Aorta (tissue), 5 donors: ENCODE measurements at regions of chr12 and their contacts with region 1.

Region 1: DNA sequence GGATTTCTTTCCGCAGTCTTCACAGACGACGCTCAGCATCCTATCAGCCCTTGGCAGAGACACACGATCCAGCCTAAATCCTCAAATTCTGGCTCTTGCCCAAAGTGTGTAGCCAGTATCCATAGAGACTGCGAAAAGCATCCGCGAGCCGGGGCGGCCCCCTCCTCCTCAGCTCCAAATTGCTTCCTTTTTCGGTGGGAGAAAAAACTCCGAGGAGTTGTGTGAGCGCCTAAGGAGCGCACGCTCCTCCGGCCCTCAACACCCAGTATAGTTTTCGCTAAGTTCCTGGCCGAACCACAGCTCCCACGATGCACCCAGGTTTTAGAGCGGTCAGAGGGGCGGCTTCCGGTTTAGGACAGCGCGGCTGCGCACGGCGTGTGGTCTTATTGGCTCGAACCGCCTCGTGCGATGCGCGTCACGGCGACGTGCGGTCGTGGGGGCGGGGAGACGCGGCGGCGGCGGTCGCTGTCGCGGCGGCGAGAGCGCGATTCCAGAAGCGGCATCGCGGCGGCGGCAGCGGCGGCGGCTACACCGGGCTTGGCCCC is at the start of gene ADIPOR2:
- DNase-seq: peak; percentile 98
- ATAC-seq: peak; percentile 99
- H3K4me3 ChIP-seq: peak within 1 kb of the TSS; percentile 66 to 77
- H3K27ac ChIP-seq: peak within 1 kb of the TSS; percentile 46 to 65
- H3K4me1 ChIP-seq: no peaks in the 10 kb centered on the region
- H3K27me3 ChIP-seq: no peaks in the 10 kb centered on the region
- total RNA-seq, gene ADIPOR2: 47.6 to 50.5 TPM

Region 2: DNA sequence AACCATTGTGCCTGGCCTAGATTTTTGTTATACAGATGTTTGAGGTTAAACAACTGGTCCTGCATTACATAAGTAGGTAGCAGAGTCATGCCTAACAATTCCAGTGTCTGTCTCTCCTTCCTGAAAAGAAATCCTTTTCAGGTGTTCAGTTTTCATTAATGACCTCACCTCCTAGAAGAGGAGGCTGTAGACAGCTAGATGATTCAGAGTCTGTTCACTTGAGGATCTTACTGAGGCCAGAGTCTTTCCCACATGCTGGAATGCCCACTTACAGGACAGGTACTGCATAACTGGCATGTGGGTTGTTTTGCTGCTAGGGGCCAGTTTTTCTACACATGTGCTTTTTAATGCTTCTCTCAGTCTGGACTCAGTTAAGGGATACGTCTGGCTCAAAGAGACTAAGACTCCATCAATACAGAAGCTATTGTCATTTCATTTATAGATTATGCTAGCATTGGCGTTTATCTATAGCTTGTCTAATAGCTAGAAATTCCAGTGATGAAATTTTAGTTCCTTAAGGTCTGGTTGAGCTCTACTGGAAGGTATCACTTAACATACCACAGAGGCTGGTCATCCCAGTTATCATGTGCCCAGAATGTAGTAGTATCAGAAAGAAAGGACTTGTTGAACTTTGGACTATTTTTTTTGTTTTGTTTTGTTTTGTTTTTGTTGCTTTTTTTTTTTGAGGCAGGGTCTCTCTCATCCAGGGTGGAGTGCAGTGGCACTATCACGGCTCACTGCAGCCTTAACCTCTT is 493.2 kb before region 1 on chr12:
- intact Hi-C with region 1: no loop called
- DNase-seq: no peak
- ATAC-seq: no peak
- H3K4me3 ChIP-seq: no peak overlapping the region
- H3K27ac ChIP-seq: no peak overlapping the region
- H3K4me1 ChIP-seq: no peaks in the 10 kb centered on the region
- H3K27me3 ChIP-seq: no peaks in the 10 kb centered on the region

Region 3: GRCh38 chr12:1661553-1662335 is 28.9 kb before region 1 on chr12:
- intact Hi-C with region 1: loop called (anchors 2 to 5 kb)
- DNase-seq: peak; percentile 97 to 98
- ATAC-seq: peak; percentile 94
- H3K4me3 ChIP-seq: peak overlapping the region in 1 of 2 donors; percentile 11
- H3K27ac ChIP-seq: peak overlapping the region in 1 of 2 donors; percentile 98
- H3K4me1 ChIP-seq: peaks cover 0 to under 1% of the 10 kb centered on the region in 2 donors
- H3K27me3 ChIP-seq: no peaks in the 10 kb centered on the region

Region 4: GRCh38 chr12:1776170-1776948 is 85.7 kb after region 1 on chr12:
- intact Hi-C with region 1: loop called in 1 of 2 experiments (anchors 10 kb)
- DNase-seq: no peak
- ATAC-seq: no peak
- H3K4me3 ChIP-seq: no peak overlapping the region
- H3K27ac ChIP-seq: no peak overlapping the region
- H3K4me1 ChIP-seq: peaks cover 0 to 2% of the 10 kb centered on the region in 2 donors
- H3K27me3 ChIP-seq: no peaks in the 10 kb centered on the region